ENCODE measurements at regions of chr10 and their contacts with region 1.

Region 1: GRCh38 chr10:63083904-63084689 is 49.0 kb upstream of the NRBF2 start:
- DNase-seq: peak; percentile 51
- H3K4me3 Mint-ChIP-seq: no peak overlapping the region
- H3K27ac Mint-ChIP-seq: no peak overlapping the region
- H3K4me1 Mint-ChIP-seq: peaks cover 2% of the 10 kb centered on the region
- H3K27me3 Mint-ChIP-seq: peaks cover 8% of the 10 kb centered on the region

Region 2: GRCh38 chr10:62594093-62594520 is 490.0 kb before region 1 on chr10:
- CTCF ChIA-PET with region 1: interaction called, 28 read pairs
- POLR2A ChIA-PET with region 1: interaction called, 3 read pairs
- intact Hi-C with region 1: loop called (anchors 1 kb)
- DNase-seq: peak; percentile 64
- H3K4me3 Mint-ChIP-seq: no peak overlapping the region
- H3K27ac Mint-ChIP-seq: no peak overlapping the region
- H3K4me1 Mint-ChIP-seq: peaks cover 2% of the 10 kb centered on the region
- H3K27me3 Mint-ChIP-seq: peaks cover 2% of the 10 kb centered on the region

Region 3: GRCh38 chr10:63003816-63004453 is 80.2 kb before region 1 on chr10:
- CTCF ChIA-PET with region 1: interaction called, 11 read pairs
- POLR2A ChIA-PET with region 1: no interaction called
- intact Hi-C with region 1: no loop called
- DNase-seq: no peak
- H3K4me3 Mint-ChIP-seq: no peak overlapping the region
- H3K27ac Mint-ChIP-seq: no peak overlapping the region
- H3K4me1 Mint-ChIP-seq: peaks cover 18% of the 10 kb centered on the region
- H3K27me3 Mint-ChIP-seq: peaks cover 23% of the 10 kb centered on the region

Measured in activated CD4-positive, alpha-beta memory T cell treated with anti-CD3 and anti-CD28 coated beads for 36 hours (primary cell).